ENCODE measurements at regions of chrX and their contacts with region 1.

Region 1: GRCh38 chrX:138858438-138858837 is 146.9 kb upstream of the FGF13 start:
- DNase-seq: peak; percentile 76
- ATAC-seq: peak; percentile 79
- H3K4me3 ChIP-seq: no peak overlapping the region
- H3K27ac ChIP-seq: peak overlapping the region; percentile 61
- H3K4me1 ChIP-seq: peaks cover 31% of the 10 kb centered on the region
- H3K27me3 ChIP-seq: no peaks in the 10 kb centered on the region
- CTCF ChIP-seq: no peak

Region 2: DNA sequence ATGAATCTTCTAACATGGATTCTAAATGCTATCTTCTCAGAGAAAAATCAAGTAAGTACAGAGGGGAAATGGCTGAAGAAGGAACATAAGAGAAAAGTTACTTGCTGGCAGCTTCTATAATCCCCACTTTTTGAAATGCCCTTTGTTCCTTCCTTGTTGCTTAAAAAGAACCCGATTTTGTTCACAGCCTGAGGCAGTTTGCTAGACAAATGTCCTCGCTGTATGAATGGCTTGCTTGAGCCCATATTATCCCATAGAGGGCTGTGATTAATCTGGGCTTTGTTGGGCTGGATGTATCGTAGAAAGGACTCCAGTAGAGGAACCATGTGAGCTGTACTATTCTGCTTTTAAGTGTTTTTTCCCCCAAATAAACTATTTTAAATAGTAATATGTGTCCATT is 12.7 kb before region 1 on chrX:
- CTCF ChIA-PET with region 1: no interaction called
- POLR2A ChIA-PET with region 1: no interaction called
- intact Hi-C with region 1: no loop called
- DNase-seq: no peak
- ATAC-seq: no peak
- H3K4me3 ChIP-seq: no peak overlapping the region
- H3K27ac ChIP-seq: no peak overlapping the region
- H3K4me1 ChIP-seq: no peaks in the 10 kb centered on the region; the same call in 1 of the 2 replicates
- H3K27me3 ChIP-seq: no peaks in the 10 kb centered on the region
- CTCF ChIP-seq: no peak

Region 3: DNA sequence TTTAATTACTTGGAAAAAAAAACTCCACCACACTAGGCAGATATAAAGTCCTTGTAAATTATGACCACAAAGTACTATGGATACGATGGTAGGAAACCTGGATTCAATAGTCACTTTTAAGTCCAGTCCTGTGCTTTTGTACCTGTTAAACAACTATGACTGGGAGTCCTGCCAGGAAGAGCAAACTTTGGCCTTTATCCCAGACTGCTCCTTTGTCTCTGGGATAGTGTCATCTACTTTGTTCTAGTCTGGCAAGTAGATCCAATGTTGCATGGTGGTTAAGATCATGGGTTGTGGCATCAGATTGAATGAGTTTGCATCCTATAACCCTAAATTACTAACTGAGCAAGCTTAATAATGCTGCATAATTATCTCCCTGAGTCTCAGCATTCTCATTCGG is 28.3 kb after region 1 on chrX:
- CTCF ChIA-PET with region 1: no interaction called
- POLR2A ChIA-PET with region 1: no interaction called
- intact Hi-C with region 1: loop called (anchors 5 kb)
- DNase-seq: peak; percentile 94
- ATAC-seq: peak; percentile 85
- H3K4me3 ChIP-seq: no peak overlapping the region
- H3K27ac ChIP-seq: peak overlapping the region; percentile 89
- H3K4me1 ChIP-seq: peaks cover 29% of the 10 kb centered on the region
- H3K27me3 ChIP-seq: no peaks in the 10 kb centered on the region
- CTCF ChIP-seq: no peak

Region 4: DNA sequence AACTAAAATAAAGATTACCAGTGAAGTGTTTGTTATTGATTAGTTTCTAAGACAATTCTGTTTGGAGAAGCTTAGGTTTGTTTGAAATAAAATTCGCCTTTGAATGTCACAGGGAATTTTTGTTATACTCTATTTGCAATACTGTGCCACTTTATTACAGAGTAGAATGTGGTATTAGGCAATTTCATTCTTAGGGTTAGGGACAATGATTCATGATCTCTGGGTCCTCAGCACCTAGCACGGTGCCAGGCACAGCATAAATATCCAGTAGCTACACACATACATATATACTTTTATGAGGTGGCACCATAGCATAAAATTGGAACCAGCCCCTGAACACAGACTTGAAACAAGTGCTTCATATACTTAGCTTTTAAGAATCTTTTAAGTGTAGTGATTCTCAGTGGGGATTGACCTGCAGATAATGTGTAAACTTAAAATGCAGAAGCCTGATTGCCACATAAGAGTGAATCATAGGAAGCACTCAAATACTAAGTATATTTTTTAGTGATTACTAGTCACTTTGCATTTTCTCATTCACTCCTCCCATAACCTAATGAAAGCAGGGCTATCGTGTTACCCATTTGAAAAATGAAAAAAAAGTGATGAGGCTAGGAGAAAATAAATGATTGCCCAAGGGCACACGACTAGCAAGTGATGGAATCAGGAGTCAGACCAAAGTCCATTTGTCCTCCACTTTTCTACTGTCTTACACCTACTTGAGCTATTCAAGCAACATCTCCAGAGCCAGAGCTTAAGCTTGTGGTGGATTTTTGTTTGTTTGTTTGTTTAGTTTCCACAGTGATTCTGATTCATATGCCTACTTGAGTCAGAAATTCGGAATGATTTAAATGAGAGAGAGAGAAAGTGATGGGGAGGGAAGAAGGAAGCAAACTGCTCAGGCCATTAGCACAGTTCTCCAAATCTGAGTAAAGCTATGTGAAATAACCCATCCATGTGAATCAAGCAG is 219.1 kb after region 1 on chrX:
- CTCF ChIA-PET with region 1: no interaction called
- POLR2A ChIA-PET with region 1: interaction called, 3 read pairs
- intact Hi-C with region 1: loop called (anchors 5 kb)
- DNase-seq: peak; percentile 88
- ATAC-seq: peak; percentile 90
- H3K4me3 ChIP-seq: peak overlapping the region; percentile 6; the same call in 1 of the 2 replicates
- H3K27ac ChIP-seq: peak overlapping the region; percentile 93
- H3K4me1 ChIP-seq: peaks cover 27% of the 10 kb centered on the region
- H3K27me3 ChIP-seq: no peaks in the 10 kb centered on the region
- CTCF ChIP-seq: no peak

Region 5: GRCh38 chrX:139126493-139126892 is 268.1 kb after region 1 on chrX:
- CTCF ChIA-PET with region 1: no interaction called
- POLR2A ChIA-PET with region 1: no interaction called
- intact Hi-C with region 1: loop called (anchors 10 kb)
- DNase-seq: peak; percentile 80
- ATAC-seq: peak; percentile 64; the same call in 1 of the 2 replicates
- H3K4me3 ChIP-seq: no peak overlapping the region
- H3K27ac ChIP-seq: no peak overlapping the region
- H3K4me1 ChIP-seq: peaks cover 15% of the 10 kb centered on the region
- H3K27me3 ChIP-seq: no peaks in the 10 kb centered on the region
- CTCF ChIP-seq: peak; percentile 77